Activated CD4-positive, alpha-beta T cell treated with anti-CD3 and anti-CD28 coated beads for 36 hours (primary cell): ENCODE measurements at regions of chr10 and their contacts with region 1.

Region 1: DNA sequence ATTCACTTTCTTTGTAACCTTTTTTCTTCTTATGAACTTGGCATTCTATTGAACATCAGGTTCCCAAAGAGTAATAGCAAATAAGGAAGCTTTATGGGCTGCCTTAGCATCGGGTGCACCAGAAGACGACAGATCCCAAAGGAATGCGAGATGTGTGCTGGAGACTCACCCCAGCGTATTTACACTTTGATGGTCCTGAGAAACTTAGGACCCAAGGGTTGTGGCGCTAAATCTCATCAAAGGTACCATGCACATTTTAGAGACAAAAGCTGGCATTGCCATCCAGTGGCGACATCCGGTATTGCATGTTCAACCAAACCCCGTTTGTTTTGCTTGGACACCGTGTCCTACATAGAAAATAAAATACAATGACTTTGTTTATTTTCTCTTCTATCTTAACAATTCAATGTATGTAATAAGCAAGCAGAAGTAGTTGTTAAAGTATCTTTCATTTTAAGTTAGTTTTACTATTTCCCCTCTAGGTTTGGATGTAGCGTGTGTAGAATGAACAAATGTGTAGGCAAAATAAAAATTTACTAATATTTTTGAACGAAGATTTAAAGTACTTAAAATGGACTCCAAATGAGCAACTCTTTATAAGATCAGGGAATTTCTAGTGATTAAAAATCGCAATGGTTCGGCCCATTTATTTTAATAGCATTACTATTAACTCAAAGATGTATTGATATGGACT is 1154.8 kb downstream of the GATA3 start:
- DNase-seq: peak; percentile 85
- ATAC-seq: peak; percentile 53
- H3K4me3 Mint-ChIP-seq: no peak overlapping the region
- H3K27ac Mint-ChIP-seq: no peak overlapping the region
- H3K4me1 Mint-ChIP-seq: peaks cover 9% of the 10 kb centered on the region
- H3K27me3 Mint-ChIP-seq: peaks cover 5% of the 10 kb centered on the region

Region 2: DNA sequence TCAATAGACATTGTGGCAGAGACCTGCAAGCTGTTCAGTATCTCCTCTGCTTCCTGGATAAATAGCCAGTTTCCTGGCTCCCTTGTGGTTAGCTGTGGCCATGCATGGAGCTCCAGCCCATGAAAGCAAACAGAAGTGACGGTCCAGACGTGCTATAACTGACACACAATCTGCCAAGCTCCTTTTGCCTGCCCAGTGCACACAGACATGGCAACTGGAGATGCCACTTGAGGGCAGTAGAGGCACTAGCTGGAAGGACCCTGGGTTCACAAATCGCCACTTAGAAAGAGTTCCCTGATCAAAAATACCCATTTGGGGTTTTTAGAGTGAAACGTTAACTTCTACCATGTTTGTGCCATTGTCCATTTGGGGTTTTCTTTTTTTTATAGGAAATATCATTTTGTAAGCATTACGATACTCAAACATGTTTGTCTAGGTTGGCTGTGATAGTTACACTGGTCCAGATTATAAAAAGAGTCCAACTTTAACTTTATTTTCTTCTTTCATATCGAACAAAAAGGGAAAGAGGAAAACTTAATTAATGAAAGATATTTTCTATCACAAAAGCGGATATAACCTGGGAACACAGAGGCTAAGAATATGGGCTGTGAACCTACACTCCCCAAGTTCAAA is 1452.8 kb before region 1 on chr10:
- CTCF ChIA-PET with region 1: no interaction called
- POLR2A ChIA-PET with region 1: no interaction called
- intact Hi-C with region 1: loop called in 1 of 2 experiments (anchors 10 kb)
- DNase-seq: peak; percentile 49
- ATAC-seq: peak; percentile 53
- H3K4me3 Mint-ChIP-seq: no peak overlapping the region
- H3K27ac Mint-ChIP-seq: no peak overlapping the region
- H3K4me1 Mint-ChIP-seq: no peaks in the 10 kb centered on the region
- H3K27me3 Mint-ChIP-seq: no peaks in the 10 kb centered on the region

Region 3: DNA sequence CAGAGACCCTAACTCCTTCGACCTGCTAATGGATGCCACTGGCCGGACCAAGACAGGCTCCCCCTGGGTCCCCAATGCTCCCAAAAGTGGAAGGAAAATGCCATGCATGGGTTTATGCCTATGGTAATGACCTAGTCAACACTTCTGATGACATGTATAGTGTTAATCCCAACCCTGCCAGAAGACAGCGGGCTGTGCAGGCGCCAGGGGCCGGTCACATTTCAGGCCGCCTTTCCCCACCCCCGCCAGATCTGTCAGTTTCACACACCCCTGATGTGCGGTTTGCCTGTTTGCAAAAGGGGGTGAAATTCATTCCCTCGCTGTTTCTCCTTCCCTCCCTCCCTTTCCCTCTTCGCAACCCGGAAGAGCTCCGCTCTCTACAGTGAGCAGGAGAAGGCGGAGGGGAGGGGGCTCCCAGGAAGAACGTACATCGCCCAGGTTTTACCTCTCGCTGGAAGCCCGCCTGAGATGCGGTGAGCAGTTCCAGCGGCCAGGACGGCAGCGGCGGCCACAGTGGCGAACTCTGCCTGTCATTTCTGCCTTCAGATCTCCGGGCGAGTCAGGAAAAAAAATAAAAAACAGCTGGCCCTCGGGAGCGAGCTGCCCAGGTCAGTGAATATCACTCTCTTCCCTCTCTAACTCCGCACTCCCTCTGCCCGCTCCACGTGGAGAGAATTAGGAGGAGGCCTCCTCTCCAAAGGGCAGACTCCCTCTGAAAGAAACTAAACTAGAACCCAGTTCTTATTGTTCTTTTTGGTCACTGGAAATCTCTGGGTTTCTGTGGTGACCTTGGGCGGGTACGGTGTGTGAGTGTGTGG is 1164.1 kb before region 1 on chr10:
- CTCF ChIA-PET with region 1: interaction called, 4 read pairs
- POLR2A ChIA-PET with region 1: no interaction called
- intact Hi-C with region 1: loop called (anchors 2 kb)
- DNase-seq: peak; percentile 43
- ATAC-seq: no peak
- H3K4me3 Mint-ChIP-seq: peak overlapping the region; percentile 57
- H3K27ac Mint-ChIP-seq: no peak overlapping the region
- H3K4me1 Mint-ChIP-seq: peaks cover 72% of the 10 kb centered on the region
- H3K27me3 Mint-ChIP-seq: peaks cover 87% of the 10 kb centered on the region

Region 4: DNA sequence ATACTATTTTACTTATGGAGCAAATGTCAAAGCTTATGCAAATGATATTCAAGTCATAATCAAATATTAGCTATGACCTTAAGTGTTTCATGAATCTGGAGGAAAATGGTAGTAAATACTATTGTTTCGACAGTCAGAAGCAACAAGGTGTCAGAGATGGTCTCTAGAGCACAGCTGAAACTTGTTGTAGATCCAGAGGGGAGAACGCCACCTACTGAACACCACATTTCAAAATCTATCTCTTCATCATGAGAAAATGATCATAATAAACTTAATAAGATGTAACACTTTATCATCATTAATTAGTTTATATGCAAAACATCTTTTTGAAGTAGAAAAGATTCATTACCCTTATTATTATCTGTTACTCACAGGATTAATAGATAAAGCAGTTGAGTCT is 736.0 kb before region 1 on chr10:
- CTCF ChIA-PET with region 1: no interaction called
- POLR2A ChIA-PET with region 1: no interaction called
- intact Hi-C with region 1: loop called in 1 of 2 experiments (anchors 10 kb)
- DNase-seq: peak; percentile 18
- ATAC-seq: peak; percentile 49
- H3K4me3 Mint-ChIP-seq: no peak overlapping the region
- H3K27ac Mint-ChIP-seq: no peak overlapping the region
- H3K4me1 Mint-ChIP-seq: peaks cover 5% of the 10 kb centered on the region
- H3K27me3 Mint-ChIP-seq: peaks cover 15% of the 10 kb centered on the region